Mammary epithelial cell (primary cell): ENCODE measurements at regions of chr19 and their contacts with region 1.

Region 1: DNA sequence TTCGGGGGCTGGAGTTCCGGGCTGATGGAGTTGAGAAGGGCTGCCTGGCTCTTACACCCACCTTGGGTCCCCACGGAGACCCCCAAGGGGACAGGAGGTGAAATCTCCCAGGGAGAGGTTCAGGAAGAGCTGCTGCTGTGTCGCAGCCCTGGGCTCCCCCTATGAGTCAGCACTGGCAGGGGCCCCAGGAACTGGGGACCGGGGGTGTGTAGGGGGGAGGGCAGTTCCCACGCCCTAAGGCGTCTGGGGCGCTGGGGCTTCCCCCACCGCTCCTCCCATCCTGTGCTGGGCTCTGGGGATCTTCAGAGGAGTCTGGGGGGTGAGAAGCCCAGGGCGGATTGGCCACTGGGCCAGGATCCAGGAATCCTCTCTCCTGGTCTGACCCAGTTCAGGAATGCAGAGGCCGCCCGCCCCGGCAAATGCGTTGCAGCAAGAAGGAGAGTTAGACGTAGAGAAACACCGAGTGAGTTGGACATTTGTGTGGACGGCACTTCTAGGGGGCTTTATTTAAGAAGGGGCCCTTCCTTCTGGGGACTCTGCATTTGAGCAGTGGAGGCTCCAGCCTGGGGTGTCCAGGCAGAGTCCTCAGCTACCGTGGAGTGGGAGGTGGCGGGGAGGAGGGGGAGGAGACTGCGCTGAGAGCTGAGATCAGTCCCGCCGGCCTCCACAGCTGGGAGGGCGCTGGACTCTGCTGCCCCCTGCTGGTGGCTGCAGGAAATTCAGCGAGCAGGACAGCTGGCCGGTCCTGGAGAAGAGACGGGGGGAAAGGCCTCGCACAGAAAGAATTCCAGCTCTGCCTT is 15.0 kb upstream of the NANOS3 start:
- DNase-seq: peak; percentile 90
- H3K4me3 ChIP-seq: peak overlapping the region; percentile 39 to 42 (median 40)
- H3K27ac ChIP-seq: peak overlapping the region; percentile 81
- H3K4me1 ChIP-seq: peaks cover 23% of the 10 kb centered on the region
- H3K27me3 ChIP-seq: peaks cover 2% of the 10 kb centered on the region
- CTCF ChIP-seq: peak; percentile 79 to 94

Region 2: GRCh38 chr19:13538601-13539253 is 323.2 kb before region 1 on chr19:
- CTCF ChIA-PET with region 1: no interaction called
- dilution Hi-C with region 1: no loop called
- in situ Hi-C with region 1: no loop called
- intact Hi-C with region 1: no loop called
- DNase-seq: no peak
- H3K4me3 ChIP-seq: no peak overlapping the region
- H3K27ac ChIP-seq: no peak overlapping the region
- H3K4me1 ChIP-seq: no peaks in the 10 kb centered on the region
- H3K27me3 ChIP-seq: no peaks in the 10 kb centered on the region
- CTCF ChIP-seq: no peak

Region 3: GRCh38 chr19:13621413-13621812 is 240.5 kb before region 1 on chr19:
- CTCF ChIA-PET with region 1: no interaction called
- dilution Hi-C with region 1: no loop called
- in situ Hi-C with region 1: loop called (anchors 25 kb)
- intact Hi-C with region 1: no loop called
- DNase-seq: peak; percentile 98
- H3K4me3 ChIP-seq: no peak overlapping the region
- H3K27ac ChIP-seq: no peak overlapping the region
- H3K4me1 ChIP-seq: peaks cover 9% of the 10 kb centered on the region
- H3K27me3 ChIP-seq: no peaks in the 10 kb centered on the region
- CTCF ChIP-seq: peak; percentile 33 to 60

Region 4: DNA sequence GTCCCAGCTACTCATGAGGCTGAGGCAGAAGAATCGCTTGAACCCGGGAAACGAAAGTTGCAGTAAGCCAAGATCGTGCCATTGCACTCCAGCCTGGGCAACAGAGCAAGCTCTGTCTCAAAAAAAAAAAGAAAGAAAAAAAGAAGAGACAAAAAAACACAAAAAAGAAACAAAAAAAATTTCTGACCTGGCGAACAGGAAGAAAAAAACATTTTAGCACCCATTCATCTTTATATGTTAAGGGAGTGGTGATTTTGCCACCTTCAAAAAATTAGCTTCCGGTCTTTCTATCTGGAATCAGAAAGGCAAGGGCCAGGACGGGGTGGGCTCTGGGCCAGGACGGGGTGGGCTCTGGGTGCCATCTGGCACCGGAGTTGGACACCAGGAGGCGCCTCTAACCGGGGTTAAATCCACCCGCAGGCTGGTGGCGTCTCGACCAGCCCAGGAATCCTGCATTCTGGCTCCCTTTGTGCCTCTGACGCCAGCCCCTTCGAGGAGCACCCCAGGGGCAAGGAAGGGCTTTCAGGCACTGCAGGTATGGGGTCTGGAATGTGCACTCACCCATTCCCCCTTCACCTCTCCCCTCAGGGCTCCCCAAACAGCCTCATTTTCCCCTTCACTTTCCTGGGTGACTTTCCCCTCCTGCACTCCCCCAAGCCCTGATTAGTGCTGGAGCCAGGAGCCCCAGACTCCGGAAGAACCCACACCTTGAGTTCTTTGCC is 77.0 kb before region 1 on chr19:
- CTCF ChIA-PET with region 1: no interaction called
- dilution Hi-C with region 1: no loop called
- in situ Hi-C with region 1: loop called (anchors 5 kb)
- intact Hi-C with region 1: loop called (anchors 1 kb)
- DNase-seq: peak; percentile 37
- H3K4me3 ChIP-seq: no peak overlapping the region
- H3K27ac ChIP-seq: no peak overlapping the region
- H3K4me1 ChIP-seq: peaks cover 19% of the 10 kb centered on the region
- H3K27me3 ChIP-seq: no peaks in the 10 kb centered on the region
- CTCF ChIP-seq: peak; percentile 16 to 80

Region 5: GRCh38 chr19:13833330-13834243 is 28.3 kb before region 1 on chr19:
- CTCF ChIA-PET with region 1: no interaction called
- dilution Hi-C with region 1: no loop called
- in situ Hi-C with region 1: no loop called
- intact Hi-C with region 1: loop called (anchors 1 kb)
- DNase-seq: peak; percentile 87
- H3K4me3 ChIP-seq: no peak overlapping the region
- H3K27ac ChIP-seq: peak overlapping the region; percentile 64
- H3K4me1 ChIP-seq: peaks cover 26% of the 10 kb centered on the region
- H3K27me3 ChIP-seq: no peaks in the 10 kb centered on the region
- CTCF ChIP-seq: peak; percentile 35 to 64